Activated B cell treated with CpG ODN at 0.5 μM for 24 hours (primary cell): ENCODE measurements at regions of chr14 and their contacts with region 1.

Region 1: DNA sequence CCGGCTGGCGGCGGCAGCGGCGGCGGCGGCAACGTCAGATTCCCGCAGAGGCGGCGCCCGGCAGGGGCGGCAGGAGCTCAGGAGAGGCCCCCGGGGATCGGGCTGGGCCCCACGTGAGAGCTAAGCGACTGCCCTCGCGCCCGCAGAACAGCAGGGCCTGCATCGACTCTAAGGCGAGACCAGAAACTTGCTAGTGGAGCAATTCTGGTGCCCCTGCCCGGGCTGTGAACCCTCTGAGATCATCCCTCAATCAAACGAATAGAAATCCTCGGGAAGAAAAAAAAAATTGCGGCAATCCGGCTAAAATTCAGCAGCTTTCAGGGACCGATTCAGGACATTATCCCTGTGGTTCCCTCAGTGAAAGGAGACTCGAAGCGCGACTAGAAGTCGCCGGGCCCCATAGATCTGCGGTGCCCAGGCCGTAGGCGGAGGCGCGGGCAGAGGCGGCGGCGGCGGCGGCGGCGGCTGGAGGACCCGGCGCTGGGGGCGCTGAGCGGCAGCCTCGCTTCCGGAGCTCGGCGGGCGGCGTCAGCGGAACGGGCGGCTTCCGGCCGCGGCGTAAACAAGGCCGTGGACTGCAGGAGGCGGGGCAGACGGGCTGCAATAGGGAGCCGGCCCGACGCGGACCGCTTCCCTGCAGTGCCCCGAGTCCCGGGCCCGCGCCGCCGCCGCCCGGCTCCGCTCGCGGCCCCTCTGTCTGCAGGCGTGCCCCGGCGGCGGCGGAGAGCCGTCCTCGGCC is at the start of gene KLHDC2:
- DNase-seq: peak; percentile 86
- ATAC-seq: peak; percentile 88
- H3K4me3 Mint-ChIP-seq: peak within 1 kb of the TSS; percentile 97
- H3K27ac Mint-ChIP-seq: peak within 1 kb of the TSS; percentile 99
- H3K4me1 Mint-ChIP-seq: peaks cover 33% of the 10 kb centered on the region
- H3K27me3 Mint-ChIP-seq: no peaks in the 10 kb centered on the region
- CTCF ChIP-seq: no peak
- total RNA-seq, gene KLHDC2: 27.0 and 31.2 TPM in 2 replicates

Region 2: GRCh38 chr14:49461529-49462401 is 306.0 kb before region 1 on chr14:
- CTCF ChIA-PET with region 1: interaction called, 6 read pairs
- POLR2A ChIA-PET with region 1: interaction called, 11 read pairs
- intact Hi-C with region 1: loop called (anchors 1 kb)
- DNase-seq: no peak
- ATAC-seq: peak; percentile 81
- H3K4me3 Mint-ChIP-seq: no peak overlapping the region
- H3K27ac Mint-ChIP-seq: no peak overlapping the region
- H3K4me1 Mint-ChIP-seq: no peaks in the 10 kb centered on the region
- H3K27me3 Mint-ChIP-seq: peaks cover 5% of the 10 kb centered on the region
- CTCF ChIP-seq: peak; percentile 62

Region 3: GRCh38 chr14:49483268-49483667 is 284.5 kb before region 1 on chr14:
- CTCF ChIA-PET with region 1: no interaction called
- POLR2A ChIA-PET with region 1: no interaction called
- intact Hi-C with region 1: no loop called
- DNase-seq: no peak
- ATAC-seq: no peak
- H3K4me3 Mint-ChIP-seq: no peak overlapping the region
- H3K27ac Mint-ChIP-seq: no peak overlapping the region
- H3K4me1 Mint-ChIP-seq: no peaks in the 10 kb centered on the region
- H3K27me3 Mint-ChIP-seq: peaks cover 5% of the 10 kb centered on the region
- CTCF ChIP-seq: no peak

Region 4: GRCh38 chr14:49598485-49599300 is 169.0 kb before region 1 on chr14 and contains the start of gene LRR1:
- CTCF ChIA-PET with region 1: interaction called, 3 read pairs
- POLR2A ChIA-PET with region 1: interaction called, 19 read pairs
- intact Hi-C with region 1: loop called (anchors 2 kb)
- DNase-seq: peak; percentile 94
- ATAC-seq: peak; percentile 67
- H3K4me3 Mint-ChIP-seq: peak within 1 kb of the TSS; percentile 95
- H3K27ac Mint-ChIP-seq: peak within 1 kb of the TSS; percentile 96
- H3K4me1 Mint-ChIP-seq: peaks cover 60% of the 10 kb centered on the region
- H3K27me3 Mint-ChIP-seq: no peaks in the 10 kb centered on the region
- CTCF ChIP-seq: no peak
- total RNA-seq, gene LRR1: 15.1 and 19.9 TPM in 2 replicates

Region 5: GRCh38 chr14:49692811-49693734 is 74.7 kb before region 1 on chr14 and contains the start of gene KLHDC1:
- CTCF ChIA-PET with region 1: interaction called, 5 read pairs
- POLR2A ChIA-PET with region 1: interaction called, 38 read pairs
- intact Hi-C with region 1: loop called (anchors 1 kb)
- DNase-seq: peak; percentile 74
- ATAC-seq: peak; percentile 80
- H3K4me3 Mint-ChIP-seq: peak within 1 kb of the TSS; percentile 83
- H3K27ac Mint-ChIP-seq: peak within 1 kb of the TSS; percentile 84
- H3K4me1 Mint-ChIP-seq: peaks cover 24% of the 10 kb centered on the region
- H3K27me3 Mint-ChIP-seq: no peaks in the 10 kb centered on the region
- CTCF ChIP-seq: no peak
- total RNA-seq, gene KLHDC1: 5.7 and 6.9 TPM in 2 replicates

Region 6: GRCh38 chr14:49959822-49960408 is 192.2 kb after region 1 on chr14:
- CTCF ChIA-PET with region 1: no interaction called
- POLR2A ChIA-PET with region 1: no interaction called
- intact Hi-C with region 1: no loop called
- DNase-seq: no peak
- ATAC-seq: peak; percentile 59
- H3K4me3 Mint-ChIP-seq: peak overlapping the region; percentile 71
- H3K27ac Mint-ChIP-seq: peak overlapping the region; percentile 96
- H3K4me1 Mint-ChIP-seq: peaks cover 67% of the 10 kb centered on the region
- H3K27me3 Mint-ChIP-seq: no peaks in the 10 kb centered on the region
- CTCF ChIP-seq: no peak